T-cell (primary cell): ENCODE measurements at regions of chr20 and their contacts with region 1.

Region 1: DNA sequence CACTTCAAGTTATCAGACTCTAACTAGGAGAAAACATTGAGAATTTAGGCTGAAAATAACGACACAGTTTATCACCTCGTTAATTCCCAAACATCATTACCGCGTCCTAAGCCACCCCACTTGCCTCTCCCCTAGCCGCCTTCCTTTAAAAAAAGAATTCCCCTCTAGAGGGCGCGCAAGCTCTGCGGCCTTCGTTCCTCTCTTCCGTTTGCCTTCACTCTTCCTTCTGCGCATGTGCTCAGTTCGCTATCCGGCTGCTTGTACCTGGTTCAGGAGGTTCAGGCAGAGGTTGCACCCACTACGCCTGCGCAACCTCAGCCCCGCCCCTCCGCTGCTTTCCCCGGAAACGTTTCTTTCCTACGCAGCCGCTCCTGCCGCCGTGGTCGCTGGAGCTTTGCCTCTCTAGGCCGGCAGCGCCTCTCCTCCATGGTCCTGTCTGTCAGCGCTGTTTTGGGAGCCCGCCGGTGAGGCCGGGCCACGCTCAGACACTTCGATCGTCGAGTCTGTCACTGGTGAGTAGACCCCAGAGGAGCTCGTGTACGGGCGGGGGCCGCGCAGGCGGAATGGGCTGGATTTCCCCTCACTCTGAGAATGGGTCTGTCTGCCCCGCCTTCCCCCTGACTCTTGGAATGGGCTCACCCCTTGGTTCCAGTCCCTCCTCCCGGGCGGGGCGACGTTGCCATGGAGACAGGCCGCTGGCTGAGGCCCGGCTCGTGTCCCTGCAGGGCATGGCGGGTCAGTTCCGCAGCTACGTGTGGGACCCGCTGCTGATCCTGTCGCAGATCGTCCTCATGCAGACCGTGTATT is at the start of gene SYS1:
- DNase-seq: peak; percentile 97 to 100 (median 98)
- ATAC-seq: peak; percentile 84 to 86 (median 84)
- H3K4me3 ChIP-seq: peak within 1 kb of the TSS; percentile 83 to 92
- H3K4me3 Mint-ChIP-seq: peak within 1 kb of the TSS; percentile 86 to 99 (median 98)
- H3K27ac ChIP-seq: peak within 1 kb of the TSS; percentile 96
- H3K27ac Mint-ChIP-seq: peak within 1 kb of the TSS; percentile 99 to 100
- H3K4me1 ChIP-seq: peaks cover 28 to 43% of the 10 kb centered on the region in 2 experiments
- H3K4me1 Mint-ChIP-seq: peaks cover 42 to 50% (median 47%) of the 10 kb centered on the region in 3 donors
- H3K27me3 ChIP-seq: no peaks in the 10 kb centered on the region
- H3K27me3 Mint-ChIP-seq: no peaks in the 10 kb centered on the region
- total RNA-seq, gene SYS1: 53.1 to 86.9 (median 58.2) TPM

Region 2: GRCh38 chr20:45290677-45291355 is 72.2 kb before region 1 on chr20:
- CTCF ChIA-PET with region 1: interaction called in 1 of 2 experiments, 12 read pairs
- POLR2A ChIA-PET with region 1: no interaction called
- DNase-seq: peak; percentile 19 to 75 (median 48)
- ATAC-seq: peak; percentile 29 to 41 (median 38)
- H3K4me3 ChIP-seq: no peak overlapping the region
- H3K4me3 Mint-ChIP-seq: no peak overlapping the region
- H3K27ac ChIP-seq: no peak overlapping the region
- H3K27ac Mint-ChIP-seq: no peak overlapping the region
- H3K4me1 ChIP-seq: peaks cover 0 to 20% of the 10 kb centered on the region in 2 experiments
- H3K4me1 Mint-ChIP-seq: peaks cover 14 to 21% (median 17%) of the 10 kb centered on the region in 3 donors
- H3K27me3 ChIP-seq: peaks cover 11 to 49% of the 10 kb centered on the region in 2 experiments
- H3K27me3 Mint-ChIP-seq: peaks cover 43 to 60% of the 10 kb centered on the region in 2 donors

Region 3: GRCh38 chr20:45415774-45416637 is 53.0 kb after region 1 on chr20 and contains the start of gene PIGT:
- CTCF ChIA-PET with region 1: interaction called, 3 to 23 read pairs
- POLR2A ChIA-PET with region 1: interaction called, 5 to 13 read pairs
- DNase-seq: peak; percentile 66 to 96 (median 91)
- ATAC-seq: peak; percentile 98
- H3K4me3 ChIP-seq: peak within 1 kb of the TSS; percentile 86 to 95
- H3K4me3 Mint-ChIP-seq: peak within 1 kb of the TSS; percentile 95 to 96 (median 95)
- H3K27ac ChIP-seq: peak within 1 kb of the TSS; percentile 87
- H3K27ac Mint-ChIP-seq: peak within 1 kb of the TSS; percentile 97 to 99
- H3K4me1 ChIP-seq: peaks cover 7 to 24% of the 10 kb centered on the region in 2 experiments
- H3K4me1 Mint-ChIP-seq: peaks cover 40 to 46% (median 44%) of the 10 kb centered on the region in 3 donors
- H3K27me3 ChIP-seq: no peaks in the 10 kb centered on the region
- H3K27me3 Mint-ChIP-seq: no peaks in the 10 kb centered on the region
- total RNA-seq, gene PIGT: 76.6 to 140 (median 79.4) TPM

Region 4: DNA sequence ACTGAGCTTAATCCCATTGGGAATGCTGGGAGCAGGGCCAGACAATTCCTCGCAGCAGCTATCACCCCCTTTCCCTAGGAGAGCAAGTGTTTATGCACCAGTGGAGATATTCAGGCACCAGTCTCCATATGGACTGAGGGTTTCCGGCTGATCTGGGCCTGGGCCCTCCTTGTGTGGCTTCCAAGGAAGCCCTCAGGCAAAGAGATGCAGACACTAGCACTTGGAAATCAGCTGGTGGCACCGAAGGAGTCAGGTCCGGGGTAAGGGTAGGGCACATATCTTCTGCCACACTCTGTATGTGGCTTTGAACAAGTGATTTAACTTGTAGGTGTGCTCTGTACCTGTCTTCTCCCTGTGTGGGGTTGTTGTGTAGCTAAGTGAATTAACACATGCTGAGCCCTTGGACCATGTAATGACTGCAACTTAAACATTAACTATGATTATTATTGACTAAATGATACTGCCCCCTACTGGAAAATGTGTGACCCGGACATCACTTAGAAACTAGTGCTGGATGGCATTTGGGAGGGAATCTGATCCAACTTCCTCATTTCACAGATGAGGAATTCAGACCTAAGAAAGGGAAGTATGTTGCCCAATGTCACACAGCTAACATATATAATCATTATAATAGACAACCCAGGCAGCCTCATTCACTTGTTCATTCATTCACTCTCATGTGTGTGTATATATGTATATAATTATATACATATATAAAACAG is 87.3 kb after region 1 on chr20:
- CTCF ChIA-PET with region 1: interaction called, 8 to 11 read pairs
- POLR2A ChIA-PET with region 1: no interaction called
- DNase-seq: peak in 6 of 35 experiments; percentile 9 to 66 (median 24)
- ATAC-seq: peak in 2 of 4 experiments; percentile 46 to 60
- H3K4me3 ChIP-seq: no peak overlapping the region
- H3K4me3 Mint-ChIP-seq: no peak overlapping the region
- H3K27ac ChIP-seq: no peak overlapping the region
- H3K27ac Mint-ChIP-seq: no peak overlapping the region
- H3K4me1 ChIP-seq: no peaks in the 10 kb centered on the region
- H3K4me1 Mint-ChIP-seq: peaks cover 7 to 11% (median 8%) of the 10 kb centered on the region in 3 donors
- H3K27me3 ChIP-seq: peaks cover 0 to 22% of the 10 kb centered on the region in 2 experiments
- H3K27me3 Mint-ChIP-seq: peaks cover 7 to 12% of the 10 kb centered on the region in 2 donors